Prostate gland (tissue), 2 donors: ENCODE measurements at regions of chr14 and their contacts with region 1.

Region 1: DNA sequence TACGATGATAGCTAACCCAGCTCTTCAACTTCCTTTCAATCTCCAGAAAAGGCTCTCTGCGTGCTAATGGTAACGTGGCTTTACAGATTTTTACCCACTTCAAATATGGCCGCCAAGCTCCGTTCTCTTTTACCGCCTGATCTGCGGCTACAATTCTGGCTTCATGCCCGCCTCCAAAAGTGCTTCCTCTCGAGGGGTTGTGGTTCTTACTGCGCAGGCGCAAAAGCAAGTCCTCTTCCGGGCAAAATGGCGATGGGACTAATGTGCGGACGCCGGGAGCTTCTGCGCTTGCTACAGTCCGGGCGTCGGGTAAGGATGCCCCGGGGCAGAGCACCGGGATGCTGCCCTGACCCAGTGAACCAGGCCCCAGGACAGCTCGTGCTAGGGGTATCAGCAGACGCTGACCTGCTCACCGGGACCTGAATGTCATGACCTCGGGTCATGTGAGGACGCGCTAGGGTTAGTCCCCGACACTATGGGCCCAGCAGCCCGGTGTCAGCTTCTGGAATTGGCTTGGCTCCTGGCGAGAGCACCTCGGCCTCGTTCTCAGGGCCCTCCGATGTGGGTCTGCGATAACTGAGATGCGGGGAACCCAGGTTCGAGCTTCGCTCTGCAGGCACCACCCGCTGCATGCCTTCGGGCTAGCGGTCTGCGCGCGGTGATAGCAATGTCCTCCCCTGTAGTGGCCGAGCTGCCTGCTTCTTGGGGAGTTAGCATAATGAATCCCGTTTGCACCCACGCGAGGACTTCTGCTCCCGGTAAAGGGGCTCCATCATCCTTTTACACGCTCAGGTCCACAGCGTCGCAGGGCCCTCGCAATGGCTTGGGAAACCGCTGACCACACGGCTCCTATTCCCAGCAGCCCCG is at the start of gene OXA1L:
- DNase-seq: peak; percentile 97
- H3K4me3 ChIP-seq: peak within 1 kb of the TSS; percentile 67 to 91
- H3K27ac ChIP-seq: peak within 1 kb of the TSS; percentile 73 to 83
- H3K4me1 ChIP-seq: no peaks in the 10 kb centered on the region
- H3K27me3 ChIP-seq: no peaks in the 10 kb centered on the region
- CTCF ChIP-seq: no peak
- POLR2A ChIP-seq: no peak
- total RNA-seq, gene OXA1L: 65.2 to 81.9 TPM

Region 2: GRCh38 chr14:22570132-22570949 is 196.3 kb before region 1 on chr14:
- intact Hi-C with region 1: loop called (anchors 5 kb)
- DNase-seq: peak; percentile 80
- H3K4me3 ChIP-seq: no peak overlapping the region
- H3K27ac ChIP-seq: peak overlapping the region; percentile 21 to 43
- H3K4me1 ChIP-seq: no peaks in the 10 kb centered on the region
- H3K27me3 ChIP-seq: no peaks in the 10 kb centered on the region
- CTCF ChIP-seq: peak; percentile 60 to 95 (median 86)
- POLR2A ChIP-seq: no peak

Region 3: DNA sequence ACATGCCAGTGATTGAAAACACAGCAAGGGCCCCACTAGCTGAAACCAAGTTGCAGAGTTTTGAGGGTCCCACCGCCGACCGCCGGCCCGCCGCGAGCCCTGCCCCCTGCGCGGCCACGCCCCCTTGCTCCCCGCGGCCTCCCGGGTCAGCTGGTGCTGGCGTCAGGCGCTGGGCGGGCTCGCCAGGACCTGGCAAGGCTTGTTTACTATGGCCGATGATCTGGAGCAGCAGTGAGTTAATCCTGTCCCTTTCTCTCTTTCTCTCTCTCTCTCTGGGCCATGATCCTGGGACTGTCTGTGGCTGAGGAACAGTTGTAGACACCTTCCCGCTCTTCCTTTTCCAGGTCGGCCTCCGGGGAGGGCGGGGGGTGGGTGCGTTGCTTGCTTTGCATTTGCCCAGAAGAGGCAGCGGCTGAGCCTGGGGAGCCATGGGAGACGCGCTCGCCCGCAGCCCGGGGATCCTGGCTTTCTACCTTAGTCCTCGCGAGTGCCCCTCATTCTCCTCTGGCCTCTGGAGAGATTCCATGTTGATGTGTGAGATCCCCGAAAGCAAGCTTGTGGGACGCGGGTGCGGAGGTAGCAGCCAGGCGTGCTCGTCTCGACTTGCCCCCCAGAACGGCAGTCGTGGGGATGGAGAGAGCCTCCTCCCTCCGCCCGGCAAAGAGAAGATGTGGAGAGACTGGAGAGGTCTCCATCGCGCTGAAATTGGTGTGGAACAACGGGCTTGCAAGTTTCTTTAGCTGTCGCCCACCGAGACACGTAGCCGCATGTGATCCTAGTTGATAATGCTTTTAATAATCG is 168.4 kb before region 1 on chr14 and contains the start of gene ABHD4:
- intact Hi-C with region 1: loop called (anchors 10 kb)
- DNase-seq: peak; percentile 82
- H3K4me3 ChIP-seq: peak within 1 kb of the TSS; percentile 70 to 72
- H3K27ac ChIP-seq: peak within 1 kb of the TSS; percentile 91 to 95
- H3K4me1 ChIP-seq: no peaks in the 10 kb centered on the region
- H3K27me3 ChIP-seq: no peaks in the 10 kb centered on the region
- CTCF ChIP-seq: peak in 1 of 4 experiments; percentile 8
- POLR2A ChIP-seq: peak; percentile 98
- total RNA-seq, gene ABHD4: 25.9 to 116 TPM

Region 4: DNA sequence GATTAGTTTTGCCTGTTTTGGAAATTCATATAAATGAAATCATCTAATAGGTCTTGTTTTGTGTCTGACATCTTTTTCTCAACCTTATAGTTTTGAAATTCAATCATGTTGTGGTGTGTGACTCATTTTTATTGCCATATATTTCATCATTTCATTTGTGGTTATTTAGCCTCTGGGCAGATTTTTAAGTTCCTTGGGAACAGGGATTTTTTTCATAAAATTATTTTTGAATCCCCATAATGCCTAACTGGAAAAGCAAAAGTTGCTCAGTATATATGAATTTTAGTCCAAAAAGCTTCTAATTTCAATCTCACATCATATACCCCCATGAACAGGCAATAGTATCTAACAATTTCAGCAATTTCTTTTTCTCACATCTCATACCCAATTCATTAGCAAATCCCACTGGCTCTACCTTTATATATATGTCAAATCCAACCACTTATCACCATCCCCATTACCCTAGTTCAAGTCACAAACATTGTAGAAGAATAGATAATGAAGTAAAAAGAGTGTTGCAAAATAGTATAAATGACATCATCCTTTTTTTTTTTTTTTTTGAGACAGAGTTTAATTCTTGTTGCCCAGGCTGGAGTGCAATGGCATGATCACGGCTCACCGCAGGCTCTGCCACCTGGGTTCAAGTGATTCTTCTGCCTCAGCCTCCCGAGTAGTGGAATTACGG is 120.0 kb before region 1 on chr14:
- intact Hi-C with region 1: no loop called
- DNase-seq: no peak
- H3K4me3 ChIP-seq: no peak overlapping the region
- H3K27ac ChIP-seq: no peak overlapping the region
- H3K4me1 ChIP-seq: no peaks in the 10 kb centered on the region
- H3K27me3 ChIP-seq: no peaks in the 10 kb centered on the region
- CTCF ChIP-seq: no peak
- POLR2A ChIP-seq: no peak